ENCODE measurements at regions of chr6 and their contacts with region 1.

Region 1: DNA sequence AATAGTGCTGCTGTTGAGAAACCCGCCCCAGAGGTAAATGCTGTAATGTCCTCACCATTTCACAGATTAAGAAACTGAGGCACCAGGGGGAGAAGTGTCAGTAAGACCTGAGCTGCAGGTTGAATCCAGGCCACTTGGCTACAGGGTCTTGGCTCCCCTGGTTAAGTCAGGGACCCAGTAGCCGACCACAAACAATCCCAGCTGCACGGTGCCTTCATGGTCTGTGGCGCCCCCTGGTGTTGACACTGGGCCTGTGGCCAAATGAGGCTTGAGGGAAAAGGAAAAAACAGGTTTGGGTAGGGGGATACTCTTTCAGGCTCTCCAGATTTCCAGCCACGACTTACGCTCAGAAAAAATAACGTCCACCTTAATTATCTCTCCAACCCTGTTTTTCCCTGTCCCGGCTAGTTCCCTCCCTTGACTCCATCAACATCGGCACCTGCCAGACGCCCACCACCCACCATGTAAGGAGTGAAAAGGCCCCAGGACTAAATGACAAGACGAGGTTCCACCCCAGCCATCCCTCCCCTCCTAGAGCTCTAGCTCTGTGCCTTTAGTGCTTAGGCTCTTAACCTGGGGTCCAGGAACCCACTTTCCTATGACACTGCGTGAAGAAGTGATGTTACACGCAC is 47.7 kb upstream of the POLR1H start:
- DNase-seq: peak; percentile 42 to 69
- ATAC-seq: peak in 7 of 8 donors; percentile 65 to 83 (median 71)
- H3K4me3 ChIP-seq: no peak overlapping the region
- H3K27ac ChIP-seq: no peak overlapping the region
- H3K4me1 ChIP-seq: no peaks in the 10 kb centered on the region
- H3K27me3 ChIP-seq: peaks cover 0 to 10% (median 0%) of the 10 kb centered on the region in 7 donors
- CTCF ChIP-seq: peak; percentile 76 to 98 (median 91)

Region 2: DNA sequence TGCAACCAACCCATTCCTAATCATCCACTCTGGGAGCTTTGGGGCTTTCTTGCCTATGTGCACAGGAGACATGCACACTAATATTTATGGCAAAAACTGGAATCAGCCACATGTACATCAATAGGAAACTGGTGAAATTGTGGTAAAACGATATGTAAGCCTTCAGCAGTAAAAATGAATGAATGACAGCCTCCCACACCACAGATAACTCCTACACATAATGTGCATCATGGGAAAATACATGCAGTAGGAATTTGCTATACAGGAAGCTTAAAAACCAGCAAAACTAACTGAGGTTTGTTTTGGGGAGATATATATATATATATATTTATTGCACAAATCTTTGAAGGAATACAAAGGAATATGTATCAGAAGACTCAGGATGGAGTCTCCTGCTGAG is 138.2 kb before region 1 on chr6:
- intact Hi-C with region 1: no loop called
- DNase-seq: no peak
- ATAC-seq: no peak
- H3K4me3 ChIP-seq: no peak overlapping the region
- H3K27ac ChIP-seq: no peak overlapping the region
- H3K4me1 ChIP-seq: no peaks in the 10 kb centered on the region
- H3K27me3 ChIP-seq: no peaks in the 10 kb centered on the region
- CTCF ChIP-seq: no peak

Region 3: GRCh38 chr6:30130887-30131862 is 117.8 kb after region 1 on chr6:
- intact Hi-C with region 1: loop called in 1 of 10 experiments (anchors 10 kb)
- DNase-seq: peak in 1 of 2 donors; percentile 71
- ATAC-seq: peak; percentile 65 to 91 (median 85)
- H3K4me3 ChIP-seq: no peak overlapping the region
- H3K27ac ChIP-seq: no peak overlapping the region
- H3K4me1 ChIP-seq: peaks cover 0 to 17% (median 10%) of the 10 kb centered on the region in 9 donors
- H3K27me3 ChIP-seq: peaks cover 10 to 97% (median 83%) of the 10 kb centered on the region in 7 donors
- CTCF ChIP-seq: peak; percentile 83 to 100 (median 97)